Common myeloid progenitor, CD34-positive (primary cell): ENCODE measurements at regions of chr3 and their contacts with region 1.

Region 1: DNA sequence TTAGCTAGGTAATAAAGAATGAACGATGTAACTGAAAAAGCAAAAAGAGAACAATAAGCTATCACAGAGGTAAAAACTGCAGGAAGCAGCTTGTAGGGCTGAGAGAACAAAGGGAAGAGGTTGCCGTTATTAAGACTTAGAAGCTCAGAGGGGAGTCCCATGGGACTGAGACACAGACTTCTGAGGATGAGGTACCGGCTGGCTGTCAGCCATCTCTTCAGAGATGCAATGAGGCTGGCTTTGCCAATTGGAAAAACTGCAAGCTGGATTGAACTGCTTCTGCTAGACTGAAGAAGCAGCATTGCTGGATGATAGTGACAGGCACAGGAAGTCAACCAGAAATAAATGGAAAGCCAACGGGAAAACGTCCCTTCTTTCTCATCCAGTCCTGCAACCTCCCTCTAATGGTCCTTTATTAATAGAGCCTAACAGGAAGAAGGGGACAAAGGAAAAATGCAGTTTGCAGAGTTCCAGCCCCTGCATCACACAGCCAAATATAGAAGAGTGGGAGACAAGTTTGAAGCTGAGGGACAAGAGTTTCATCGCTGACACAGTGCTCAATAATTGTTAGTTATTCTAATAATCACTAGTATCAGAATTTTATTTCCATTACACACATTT is 21.1 kb upstream of the KLHL6 start:
- DNase-seq: peak in 2 of 3 donors; percentile 45 to 51
- H3K4me3 ChIP-seq: no peak overlapping the region
- H3K27ac ChIP-seq: no peak overlapping the region
- H3K4me1 ChIP-seq: peaks cover 6 to 9% (median 7%) of the 10 kb centered on the region in 4 experiments
- H3K27me3 ChIP-seq: no peaks in the 10 kb centered on the region

Region 2: DNA sequence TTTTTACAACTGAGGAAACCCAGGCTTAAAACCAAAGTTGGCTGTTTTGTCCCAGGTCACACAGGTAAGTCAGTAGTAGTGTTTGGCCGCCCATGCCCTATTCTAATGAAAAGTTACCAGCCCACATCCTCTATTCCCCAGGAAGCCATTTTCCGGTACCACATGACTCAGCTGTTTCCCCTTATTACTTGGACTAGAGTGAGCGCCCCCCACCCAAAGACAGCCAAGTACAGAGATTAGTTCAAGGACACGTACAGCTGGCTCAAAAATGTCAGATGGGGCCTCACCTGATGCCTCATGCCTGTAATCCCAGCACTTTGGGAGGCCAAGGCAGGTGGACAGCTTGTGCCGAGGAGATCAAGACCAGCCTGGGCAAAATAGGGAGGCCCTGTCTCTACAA is 12.6 kb before region 1 on chr3:
- CTCF ChIA-PET with region 1: interaction called, 11 read pairs
- POLR2A ChIA-PET with region 1: no interaction called
- DNase-seq: peak; percentile 70 to 88 (median 87)
- H3K4me3 ChIP-seq: peak overlapping the region in 4 of 7 experiments; percentile 16 to 40 (median 31)
- H3K27ac ChIP-seq: no peak overlapping the region
- H3K4me1 ChIP-seq: peaks cover 5 to 44% (median 37%) of the 10 kb centered on the region in 4 experiments
- H3K27me3 ChIP-seq: no peaks in the 10 kb centered on the region

Region 3: DNA sequence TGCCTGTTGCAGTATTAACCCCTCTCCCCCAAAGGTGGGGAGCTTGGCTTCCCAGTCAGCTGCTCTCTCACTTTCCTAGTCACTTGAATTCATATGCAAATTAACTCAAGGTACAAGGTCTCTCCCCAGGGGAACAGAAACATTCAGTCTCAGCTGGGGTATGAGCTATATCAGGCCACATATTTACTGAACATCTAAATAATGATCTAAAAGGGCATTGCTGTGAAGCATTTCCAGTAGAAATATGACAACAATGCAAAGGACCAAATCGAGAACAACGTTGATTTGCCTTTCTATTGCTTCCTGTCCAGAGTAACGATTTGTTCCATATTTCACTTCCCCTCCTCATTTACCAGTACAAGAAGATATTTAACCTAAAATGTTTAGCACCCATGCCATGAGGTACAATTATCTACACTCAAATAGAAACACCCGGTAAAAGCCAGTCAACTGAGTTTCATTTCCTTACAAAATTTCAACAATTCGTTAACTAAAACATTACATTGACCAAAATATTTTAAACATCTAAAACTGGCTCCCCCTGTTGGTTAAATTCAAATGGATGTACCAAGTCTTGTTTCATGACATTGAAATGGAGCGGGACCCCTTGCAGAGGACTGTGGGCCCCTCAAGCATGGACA is 15.4 kb after region 1 on chr3:
- CTCF ChIA-PET with region 1: interaction called, 15 read pairs
- POLR2A ChIA-PET with region 1: no interaction called
- DNase-seq: peak; percentile 47 to 64 (median 59)
- H3K4me3 ChIP-seq: peak overlapping the region in 3 of 7 experiments; percentile 19 to 69 (median 54)
- H3K27ac ChIP-seq: no peak overlapping the region
- H3K4me1 ChIP-seq: peaks cover 2 to 20% (median 15%) of the 10 kb centered on the region in 4 experiments
- H3K27me3 ChIP-seq: no peaks in the 10 kb centered on the region